ENCODE measurements at regions of chr6 and their contacts with region 1.

Region 1: DNA sequence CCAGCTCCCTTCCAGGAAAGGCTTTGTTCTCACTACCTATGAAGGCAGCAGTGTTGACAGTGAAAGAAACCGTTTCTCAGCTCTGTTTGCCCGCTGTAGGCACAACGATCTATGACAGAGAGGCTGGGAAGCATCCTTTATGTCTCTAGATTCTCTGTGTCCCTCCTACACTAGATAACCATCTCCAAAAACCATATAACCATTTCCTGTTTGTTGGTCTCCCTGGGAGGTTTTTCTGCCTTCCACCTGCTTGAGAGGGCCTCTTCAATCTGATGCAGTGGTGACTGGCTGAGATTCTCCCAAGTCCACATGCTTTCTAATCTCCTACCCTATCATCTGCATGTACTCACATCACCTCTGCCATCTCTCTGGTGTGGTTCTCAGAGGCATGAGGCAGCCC is 32.0 kb upstream of the TMEM217 start:
- H3K4me3 ChIP-seq: no peak overlapping the region
- H3K27ac ChIP-seq: no peak overlapping the region
- H3K4me1 ChIP-seq: no peaks in the 10 kb centered on the region
- CTCF ChIP-seq: no peak

Region 2: DNA sequence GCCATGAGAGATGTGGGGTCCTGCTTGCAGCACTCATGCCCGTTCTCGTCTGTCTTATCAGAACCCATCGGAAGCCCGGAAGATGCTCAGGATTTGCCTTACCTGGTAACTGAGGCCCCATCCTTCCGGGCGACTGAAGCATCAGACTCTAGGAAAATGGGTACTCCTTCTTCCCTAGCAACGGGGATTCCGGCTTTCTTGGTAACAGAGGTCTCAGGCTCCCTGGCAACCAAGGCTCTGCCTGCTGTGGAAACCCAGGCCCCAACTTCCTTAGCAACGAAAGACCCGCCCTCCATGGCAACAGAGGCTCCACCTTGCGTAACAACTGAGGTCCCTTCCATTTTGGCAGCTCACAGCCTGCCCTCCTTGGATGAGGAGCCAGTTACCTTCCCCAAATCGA is 327.1 kb before region 1 on chr6:
- CTCF ChIA-PET with region 1: no interaction called
- POLR2A ChIA-PET with region 1: no interaction called
- H3K4me3 ChIP-seq: no peak overlapping the region
- H3K27ac ChIP-seq: no peak overlapping the region
- H3K4me1 ChIP-seq: no peaks in the 10 kb centered on the region
- CTCF ChIP-seq: no peak

Region 3: GRCh38 chr6:37303932-37304363 is 14.0 kb after region 1 on chr6:
- CTCF ChIA-PET with region 1: interaction called, 25 read pairs
- POLR2A ChIA-PET with region 1: no interaction called
- H3K4me3 ChIP-seq: no peak overlapping the region
- H3K27ac ChIP-seq: no peak overlapping the region
- H3K4me1 ChIP-seq: peaks cover 5% of the 10 kb centered on the region
- CTCF ChIP-seq: peak; percentile 61; the same call in 1 of the 2 replicates

Measured in HEK293 (cell line).